ENCODE measurements at regions of chr7 and their contacts with region 1.

Region 1: DNA sequence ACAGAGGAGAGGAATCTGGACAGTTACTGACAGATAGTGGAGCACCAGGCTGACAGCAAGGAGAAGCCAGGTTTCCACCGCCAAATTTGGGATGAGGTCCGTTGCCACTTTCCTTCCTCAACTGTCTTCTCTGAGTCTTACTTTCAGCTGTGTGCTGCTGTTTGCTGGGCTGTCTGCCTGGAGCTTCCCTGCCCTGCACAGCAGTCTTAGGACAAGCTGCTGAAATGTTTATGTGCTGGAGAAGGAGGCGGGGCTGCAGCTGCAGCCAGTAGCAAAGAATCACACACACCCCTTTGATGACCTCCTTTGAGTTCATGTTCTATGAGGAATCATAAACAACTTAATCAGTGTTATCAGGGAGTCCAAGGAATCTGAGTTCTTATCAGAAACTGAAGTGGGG is 17.4 kb upstream of the CYP3A7 start:
- DNase-seq: peak; percentile 78
- H3K4me3 ChIP-seq: no peak overlapping the region
- H3K27ac ChIP-seq: peak overlapping the region; percentile 64 to 84 (median 79)
- H3K4me1 ChIP-seq: peaks cover 4 to 23% (median 10%) of the 10 kb centered on the region in 4 donors
- H3K27me3 ChIP-seq: no peaks in the 10 kb centered on the region
- CTCF ChIP-seq: no peak
- EP300 ChIP-seq: no peak
- POLR2A ChIP-seq: peak; percentile 91

Region 2: DNA sequence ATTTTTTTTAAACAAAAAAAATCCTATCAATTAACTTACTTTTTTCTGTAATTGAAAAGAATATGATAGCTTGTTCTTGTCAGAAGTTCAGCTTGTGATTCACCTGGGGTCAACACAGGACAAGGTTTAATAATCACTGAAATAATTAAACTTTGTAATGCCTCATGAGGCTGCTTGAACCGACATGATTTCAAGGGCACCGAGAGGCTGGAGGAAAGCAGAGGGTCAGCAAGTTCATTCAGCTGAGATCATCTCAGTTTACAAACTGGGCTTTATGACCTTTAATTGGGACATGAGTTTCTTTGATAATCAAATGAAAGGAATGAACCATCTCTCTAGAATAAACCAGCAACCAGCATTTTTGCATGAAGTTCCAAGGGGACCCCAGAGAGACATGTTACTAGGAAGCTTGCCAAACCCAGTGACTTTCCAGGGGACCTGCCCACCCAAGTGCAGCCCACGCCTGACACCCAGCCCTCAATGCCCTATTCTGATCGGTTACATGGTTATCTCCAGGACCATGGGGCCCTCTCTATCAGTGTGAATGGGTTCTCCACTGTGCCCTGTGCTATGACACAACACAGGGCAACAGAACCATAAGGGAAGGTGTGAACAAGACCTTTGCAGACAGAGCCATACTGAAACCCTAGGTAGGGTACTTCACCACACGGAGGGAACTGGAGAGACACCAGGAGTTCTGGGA is 39.4 kb after region 1 on chr7:
- in situ Hi-C with region 1: no loop called
- intact Hi-C with region 1: loop called (anchors 1 kb)
- DNase-seq: no peak
- H3K4me3 ChIP-seq: no peak overlapping the region
- H3K27ac ChIP-seq: no peak overlapping the region
- H3K4me1 ChIP-seq: no peaks in the 10 kb centered on the region
- H3K27me3 ChIP-seq: no peaks in the 10 kb centered on the region
- CTCF ChIP-seq: no peak
- EP300 ChIP-seq: no peak
- POLR2A ChIP-seq: no peak

Measured in transverse colon (tissue), 4 donors.